A673 (cell line): ENCODE measurements at regions of chr17 and their contacts with region 1.

Region 1: GRCh38 chr17:2244545-2245525 is 58.8 kb downstream of the SMG6 start:
- DNase-seq: peak; percentile 83
- H3K4me3 ChIP-seq: no peak overlapping the region
- H3K27ac ChIP-seq: no peak overlapping the region
- H3K4me1 ChIP-seq: no peaks in the 10 kb centered on the region
- H3K27me3 ChIP-seq: no peaks in the 10 kb centered on the region
- CTCF ChIP-seq: peak; percentile 98

Region 2: DNA sequence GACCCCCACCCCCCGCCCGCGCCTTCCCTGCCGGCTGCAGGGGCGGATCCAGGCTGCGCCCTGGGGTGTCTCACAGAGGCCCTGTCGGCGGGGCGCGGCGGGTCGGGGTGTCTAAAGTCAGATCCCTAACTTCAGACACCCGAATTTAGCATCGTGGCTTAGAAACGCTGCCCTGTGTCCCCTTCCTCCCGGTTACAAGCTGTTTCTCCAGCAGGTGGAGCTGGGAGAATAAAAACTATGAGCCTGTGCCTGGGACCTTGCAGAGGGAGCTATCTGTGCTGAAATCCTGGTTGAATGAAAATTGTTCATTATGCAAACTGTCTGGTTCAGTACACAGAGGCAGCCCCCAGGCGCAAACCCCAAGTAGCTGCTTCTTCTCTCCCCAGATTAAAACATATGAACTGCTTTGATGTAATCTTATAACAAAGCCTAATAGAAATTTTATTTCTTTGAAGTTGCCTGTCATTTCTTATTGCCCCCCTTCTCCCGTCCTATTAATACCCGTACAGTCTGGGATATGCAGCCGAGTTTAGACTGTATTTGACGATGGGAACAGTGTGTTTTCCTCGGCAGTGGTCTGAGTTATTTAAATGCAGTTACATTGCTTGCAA is 336.0 kb before region 1 on chr17:
- CTCF ChIA-PET with region 1: interaction called, 11 read pairs
- POLR2A ChIA-PET with region 1: no interaction called
- intact Hi-C with region 1: loop called (anchors 2 kb)
- DNase-seq: peak; percentile 90
- H3K4me3 ChIP-seq: peak overlapping the region; percentile 44
- H3K27ac ChIP-seq: no peak overlapping the region
- H3K4me1 ChIP-seq: peaks cover 13% of the 10 kb centered on the region
- H3K27me3 ChIP-seq: no peaks in the 10 kb centered on the region
- CTCF ChIP-seq: peak; percentile 82

Region 3: GRCh38 chr17:2054512-2055291 is 190.1 kb before region 1 on chr17 and contains the start of gene HIC1:
- CTCF ChIA-PET with region 1: interaction called, 47 read pairs
- POLR2A ChIA-PET with region 1: no interaction called
- intact Hi-C with region 1: loop called (anchors 1 kb)
- DNase-seq: peak; percentile 81
- H3K4me3 ChIP-seq: peak within 1 kb of the TSS; percentile 58
- H3K27ac ChIP-seq: no peak within 1 kb of the TSS
- H3K4me1 ChIP-seq: peaks cover 17% of the 10 kb centered on the region
- H3K27me3 ChIP-seq: no peaks in the 10 kb centered on the region
- CTCF ChIP-seq: peak; percentile 69
- total RNA-seq, gene HIC1: 0.84 and 1.5 TPM in 2 replicates

Region 4: DNA sequence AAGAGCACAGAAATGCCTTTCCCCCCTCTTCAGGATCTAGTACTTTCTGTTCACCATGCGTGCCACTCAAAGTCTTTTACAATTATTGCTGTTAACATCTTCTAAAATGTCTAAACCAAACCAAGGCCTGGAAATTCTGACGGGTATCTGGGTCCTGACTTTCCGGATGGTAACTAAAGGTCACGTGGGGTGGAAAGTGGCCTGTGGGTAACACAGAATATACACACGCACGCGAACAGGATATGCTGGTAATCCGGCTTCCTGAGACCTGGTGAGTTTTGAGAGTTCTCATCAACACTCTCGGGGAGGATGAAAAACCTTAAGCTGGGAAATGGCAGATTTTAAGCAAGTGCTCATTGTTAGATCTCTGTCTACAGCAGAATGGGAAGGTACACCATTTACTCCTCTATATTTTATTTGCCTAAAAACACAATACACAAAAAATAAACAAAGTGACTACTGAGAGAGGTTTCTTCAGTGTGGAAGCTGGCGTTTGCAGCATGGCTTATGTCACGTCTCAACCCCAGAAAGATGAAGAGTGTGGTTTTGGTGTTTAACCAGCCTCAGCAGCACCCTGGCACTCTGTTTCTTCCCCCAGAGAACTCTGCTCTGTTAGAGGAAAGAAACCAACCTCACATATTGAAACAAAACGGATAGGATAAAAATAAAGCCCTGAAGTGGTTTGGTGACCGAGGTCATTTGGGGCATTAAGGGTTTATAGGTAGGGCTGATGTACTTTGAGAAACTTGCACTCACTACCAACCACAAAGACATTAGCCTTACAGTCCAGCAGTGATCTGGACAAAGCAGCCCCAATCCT is 21.4 kb after region 1 on chr17:
- CTCF ChIA-PET with region 1: interaction called, 10 read pairs
- POLR2A ChIA-PET with region 1: no interaction called
- intact Hi-C with region 1: no loop called
- DNase-seq: no peak
- H3K4me3 ChIP-seq: no peak overlapping the region
- H3K27ac ChIP-seq: no peak overlapping the region
- H3K4me1 ChIP-seq: no peaks in the 10 kb centered on the region
- H3K27me3 ChIP-seq: no peaks in the 10 kb centered on the region
- CTCF ChIP-seq: no peak

Region 5: GRCh38 chr17:2624292-2624731 is 379.5 kb after region 1 on chr17:
- CTCF ChIA-PET with region 1: no interaction called
- POLR2A ChIA-PET with region 1: no interaction called
- intact Hi-C with region 1: no loop called
- DNase-seq: peak; percentile 84
- H3K4me3 ChIP-seq: no peak overlapping the region
- H3K27ac ChIP-seq: peak overlapping the region; percentile 63
- H3K4me1 ChIP-seq: peaks cover 19% of the 10 kb centered on the region
- H3K27me3 ChIP-seq: no peaks in the 10 kb centered on the region
- CTCF ChIP-seq: no peak